Endothelial cell of umbilical vein (primary cell): ENCODE measurements at regions of chr22 and their contacts with region 1.

Region 1: DNA sequence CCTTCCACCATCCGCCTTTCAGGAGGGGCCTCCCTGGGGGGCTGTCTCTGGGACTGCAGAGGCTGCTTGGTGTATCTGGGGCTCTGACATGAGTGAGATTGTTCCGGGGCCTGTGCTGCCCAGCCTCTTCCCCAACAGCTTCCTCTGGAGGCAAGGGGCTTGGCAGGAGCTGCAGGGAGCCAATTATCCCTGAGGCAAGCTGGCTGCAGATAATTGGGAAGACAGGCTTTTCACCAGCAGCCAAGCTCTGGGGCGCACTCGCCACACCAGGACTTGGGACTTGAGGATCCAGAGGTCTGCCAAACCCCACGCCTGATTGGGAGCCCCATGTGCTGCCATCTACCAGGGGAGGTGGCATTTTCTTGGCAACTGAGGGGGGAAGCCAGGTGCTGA is 15.6 kb upstream of the RTN4R start:
- DNase-seq: no peak
- H3K4me3 ChIP-seq: no peak overlapping the region
- H3K27ac ChIP-seq: no peak overlapping the region
- H3K4me1 ChIP-seq: no peaks in the 10 kb centered on the region
- H3K27me3 ChIP-seq: no peaks in the 10 kb centered on the region
- CTCF ChIP-seq: no peak
- POLR2A ChIP-seq: no peak

Region 2: DNA sequence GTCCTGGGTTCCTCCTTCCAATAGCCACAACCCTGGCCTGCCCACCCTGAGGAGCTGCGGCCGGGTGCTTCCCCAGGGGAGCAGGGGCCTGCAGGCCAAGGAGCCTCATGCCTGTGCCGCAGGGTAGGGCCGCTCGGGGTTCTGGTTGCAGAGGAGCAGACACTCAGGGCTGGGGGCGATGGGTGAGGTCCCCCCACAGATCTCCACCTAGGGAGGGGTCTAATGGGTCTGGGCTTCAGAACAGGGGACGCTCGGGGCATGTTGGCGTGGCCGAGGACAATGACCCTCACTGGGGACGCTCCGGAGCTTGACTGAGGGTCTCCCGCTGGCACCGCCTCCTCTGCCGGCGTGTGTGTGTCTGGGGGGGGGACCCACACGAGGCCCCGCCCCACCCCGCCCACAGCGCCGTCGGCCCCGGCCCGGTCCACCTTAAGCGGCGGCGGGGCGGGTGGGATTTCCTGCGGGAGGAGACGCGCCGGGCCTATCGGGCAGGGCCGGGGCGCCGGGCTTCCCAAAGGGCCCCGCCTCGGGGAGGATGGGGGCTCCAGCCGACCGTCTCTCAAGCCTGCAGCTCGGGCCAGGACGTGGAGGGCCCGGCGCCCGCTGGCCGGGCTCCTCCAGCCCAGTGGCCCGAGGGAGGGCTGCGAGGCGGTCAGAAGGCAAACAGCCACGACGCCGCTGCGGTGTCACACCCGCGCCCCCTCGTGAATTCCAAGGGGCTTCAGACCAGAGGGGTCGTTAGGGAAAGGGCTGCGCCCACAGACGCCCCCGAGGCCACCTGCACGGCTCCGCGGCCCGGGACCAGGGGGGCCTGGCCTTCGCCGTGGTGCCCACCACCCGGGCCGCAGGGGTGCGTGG is 152.7 kb before region 1 on chr22:
- CTCF ChIA-PET with region 1: no interaction called
- POLR2A ChIA-PET with region 1: no interaction called
- dilution Hi-C with region 1: no loop called
- intact Hi-C with region 1: loop called (anchors 1 kb)
- DNase-seq: peak; percentile 82
- H3K4me3 ChIP-seq: peak overlapping the region; percentile 37 to 85 (median 46)
- H3K27ac ChIP-seq: peak overlapping the region; percentile 46
- H3K4me1 ChIP-seq: peaks cover 6% of the 10 kb centered on the region
- H3K27me3 ChIP-seq: no peaks in the 10 kb centered on the region
- CTCF ChIP-seq: no peak
- POLR2A ChIP-seq: no peak